ENCODE measurements at regions of chr11 and their contacts with region 1.

Region 1: GRCh38 chr11:32792948-32793475 is 1.4 kb downstream of the CCDC73 start:
- DNase-seq: peak in 5 of 10 donors; percentile 51 to 84 (median 68)

Region 2: DNA sequence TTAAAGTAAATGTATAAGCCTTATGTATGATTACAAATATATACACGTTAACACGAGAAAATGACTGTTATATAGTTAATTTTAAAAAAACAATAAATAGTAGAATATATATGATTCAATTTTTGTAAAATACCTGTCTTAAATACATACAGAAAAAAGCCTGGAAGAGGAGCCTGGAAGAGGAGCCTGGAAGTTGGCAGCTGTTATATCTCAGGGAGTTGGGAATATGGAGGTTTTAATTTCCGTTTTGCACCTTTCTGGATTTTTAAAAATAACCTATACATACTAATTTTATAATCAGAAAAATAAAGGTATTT is 469.2 kb before region 1 on chr11:
- intact Hi-C with region 1: loop called (anchors 5 kb)
- DNase-seq: no peak

Region 3: GRCh38 chr11:32713496-32713895 is 79.5 kb before region 1 on chr11:
- intact Hi-C with region 1: loop called (anchors 2 kb)
- DNase-seq: no peak

Region 4: GRCh38 chr11:33060271-33060670 is 267.3 kb after region 1 on chr11:
- intact Hi-C with region 1: no loop called
- DNase-seq: peak in 1 of 10 donors; percentile 58

Measured in posterior cingulate gyrus (tissue), 11 donors.